Endothelial cell of umbilical vein (primary cell): ENCODE measurements at regions of chr7 and their contacts with region 1.

Region 1: GRCh38 chr7:26365077-26365900 is 73.6 kb downstream of the SNX10 start:
- DNase-seq: peak; percentile 88
- H3K4me3 ChIP-seq: no peak overlapping the region
- H3K27ac ChIP-seq: no peak overlapping the region
- H3K4me1 ChIP-seq: peaks cover 15% of the 10 kb centered on the region
- H3K27me3 ChIP-seq: peaks cover 0 to 8% of the 10 kb centered on the region in 2 experiments
- CTCF ChIP-seq: peak; percentile 56 to 60
- POLR2A ChIP-seq: no peak

Region 2: GRCh38 chr7:26078437-26079336 is 286.6 kb before region 1 on chr7:
- CTCF ChIA-PET with region 1: interaction called, 233 read pairs
- POLR2A ChIA-PET with region 1: no interaction called
- dilution Hi-C with region 1: no loop called
- intact Hi-C with region 1: loop called (anchors 2 kb)
- DNase-seq: peak; percentile 45
- H3K4me3 ChIP-seq: no peak overlapping the region
- H3K27ac ChIP-seq: no peak overlapping the region
- H3K4me1 ChIP-seq: no peaks in the 10 kb centered on the region
- H3K27me3 ChIP-seq: peaks cover 27 to 54% of the 10 kb centered on the region in 2 experiments
- CTCF ChIP-seq: peak; percentile 13 to 45
- POLR2A ChIP-seq: no peak

Region 3: DNA sequence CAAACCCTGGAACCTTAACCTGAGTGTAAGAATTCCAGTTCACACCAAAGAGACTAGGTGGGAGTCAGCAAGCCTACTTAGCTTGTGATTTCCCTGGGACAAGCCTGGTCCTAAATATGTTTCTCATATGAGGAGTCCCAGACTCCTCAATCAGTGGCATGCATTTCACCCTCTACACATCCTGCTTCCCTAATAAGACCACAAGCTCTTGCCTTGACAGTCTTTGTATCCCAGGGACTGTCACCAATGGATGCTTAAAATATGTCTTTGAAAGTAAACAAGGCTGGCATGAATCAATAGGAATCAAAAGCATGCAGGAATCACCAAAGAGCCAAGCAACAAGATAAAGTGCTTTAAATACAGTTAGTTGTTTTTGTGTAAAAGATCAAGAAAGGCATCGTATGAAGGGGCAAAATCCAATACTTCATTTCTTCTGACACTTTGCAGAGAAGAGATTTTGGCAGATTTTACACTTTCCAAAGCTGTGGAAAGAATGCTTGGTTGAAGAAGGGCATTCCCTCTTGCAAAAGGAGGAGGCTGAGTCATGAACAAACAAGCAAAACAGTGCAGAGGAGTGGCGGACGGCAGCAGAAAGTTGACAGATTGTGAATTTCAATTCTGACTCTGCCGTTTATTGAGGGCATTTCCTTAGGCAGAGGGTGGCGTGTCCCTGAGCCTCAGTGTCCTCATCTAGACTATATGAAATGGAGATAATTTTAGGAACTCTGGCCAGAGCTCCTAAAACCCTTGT is 221.8 kb before region 1 on chr7:
- CTCF ChIA-PET with region 1: no interaction called
- POLR2A ChIA-PET with region 1: no interaction called
- dilution Hi-C with region 1: no loop called
- intact Hi-C with region 1: no loop called
- DNase-seq: no peak
- H3K4me3 ChIP-seq: no peak overlapping the region
- H3K27ac ChIP-seq: no peak overlapping the region
- H3K4me1 ChIP-seq: no peaks in the 10 kb centered on the region
- H3K27me3 ChIP-seq: peaks cover 5 to 6% of the 10 kb centered on the region in 2 experiments
- CTCF ChIP-seq: no peak
- POLR2A ChIP-seq: no peak

Region 4: GRCh38 chr7:26278770-26279169 is 86.5 kb before region 1 on chr7:
- CTCF ChIA-PET with region 1: interaction called, 4 read pairs
- POLR2A ChIA-PET with region 1: no interaction called
- dilution Hi-C with region 1: no loop called
- intact Hi-C with region 1: loop called (anchors 5 kb)
- DNase-seq: no peak
- H3K4me3 ChIP-seq: no peak overlapping the region
- H3K27ac ChIP-seq: no peak overlapping the region
- H3K4me1 ChIP-seq: no peaks in the 10 kb centered on the region
- H3K27me3 ChIP-seq: no peaks in the 10 kb centered on the region
- CTCF ChIP-seq: no peak
- POLR2A ChIP-seq: no peak

Region 5: GRCh38 chr7:26398756-26399501 is 33.6 kb after region 1 on chr7:
- CTCF ChIA-PET with region 1: interaction called, 22 read pairs
- POLR2A ChIA-PET with region 1: no interaction called
- dilution Hi-C with region 1: no loop called
- intact Hi-C with region 1: no loop called
- DNase-seq: peak; percentile 78
- H3K4me3 ChIP-seq: peak overlapping the region; percentile 12 to 65 (median 61)
- H3K27ac ChIP-seq: peak overlapping the region; percentile 39
- H3K4me1 ChIP-seq: peaks cover 11% of the 10 kb centered on the region
- H3K27me3 ChIP-seq: no peaks in the 10 kb centered on the region
- CTCF ChIP-seq: peak; percentile 42 to 65
- POLR2A ChIP-seq: no peak

Region 6: DNA sequence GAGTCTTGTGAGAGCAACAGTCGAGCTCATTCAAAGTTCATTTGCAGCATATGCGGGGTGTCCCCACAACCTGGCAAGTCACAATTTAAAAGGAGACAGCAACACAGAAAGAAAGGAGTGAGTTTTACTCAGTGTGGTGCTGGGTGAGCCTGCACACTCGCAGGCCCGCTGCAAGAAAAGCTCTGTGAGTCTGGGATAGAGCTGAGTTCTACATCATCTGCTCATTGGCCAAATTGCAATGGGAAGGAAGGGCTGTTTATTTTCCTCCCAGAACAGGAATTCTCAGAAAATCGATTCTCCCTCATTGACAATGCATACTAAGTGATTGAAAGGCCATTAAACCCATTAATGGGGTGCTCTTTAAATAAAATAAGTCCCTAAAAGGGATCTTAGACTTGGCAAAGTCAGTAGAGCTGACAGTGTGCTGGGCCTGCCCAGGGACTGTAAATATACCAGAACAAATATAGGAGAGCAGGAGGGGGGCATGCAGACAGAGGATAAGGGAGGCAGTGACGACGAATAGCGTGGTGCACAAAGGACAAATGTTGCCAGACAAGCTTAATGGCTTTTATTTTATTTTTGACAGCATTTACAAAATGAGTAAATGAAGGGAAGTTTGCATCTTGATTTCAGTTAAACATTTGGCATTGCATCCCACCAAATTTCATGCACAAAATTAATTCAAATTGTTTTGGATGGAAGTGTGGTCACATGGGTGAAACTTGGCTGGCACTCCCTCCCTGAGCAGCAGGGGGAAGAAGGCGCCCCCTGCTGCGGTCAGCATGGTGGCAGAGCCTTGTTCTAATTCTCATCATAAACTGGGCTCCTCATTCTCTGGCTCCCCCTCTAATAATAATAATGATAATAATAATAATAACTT is 142.1 kb after region 1 on chr7:
- CTCF ChIA-PET with region 1: interaction called, 54 read pairs
- POLR2A ChIA-PET with region 1: no interaction called
- dilution Hi-C with region 1: no loop called
- intact Hi-C with region 1: no loop called
- DNase-seq: peak; percentile 25
- H3K4me3 ChIP-seq: no peak overlapping the region
- H3K27ac ChIP-seq: no peak overlapping the region
- H3K4me1 ChIP-seq: no peaks in the 10 kb centered on the region
- H3K27me3 ChIP-seq: peaks cover 10% of the 10 kb centered on the region in 2 experiments
- CTCF ChIP-seq: peak; percentile 30 to 52
- POLR2A ChIP-seq: no peak

Region 7: GRCh38 chr7:26549281-26549943 is 184.1 kb after region 1 on chr7:
- CTCF ChIA-PET with region 1: no interaction called
- POLR2A ChIA-PET with region 1: no interaction called
- dilution Hi-C with region 1: no loop called
- intact Hi-C with region 1: no loop called
- DNase-seq: peak; percentile 19
- H3K4me3 ChIP-seq: no peak overlapping the region
- H3K27ac ChIP-seq: no peak overlapping the region
- H3K4me1 ChIP-seq: no peaks in the 10 kb centered on the region
- H3K27me3 ChIP-seq: peaks cover 1 to 3% of the 10 kb centered on the region in 2 experiments
- CTCF ChIP-seq: no peak
- POLR2A ChIP-seq: no peak

Region 8: DNA sequence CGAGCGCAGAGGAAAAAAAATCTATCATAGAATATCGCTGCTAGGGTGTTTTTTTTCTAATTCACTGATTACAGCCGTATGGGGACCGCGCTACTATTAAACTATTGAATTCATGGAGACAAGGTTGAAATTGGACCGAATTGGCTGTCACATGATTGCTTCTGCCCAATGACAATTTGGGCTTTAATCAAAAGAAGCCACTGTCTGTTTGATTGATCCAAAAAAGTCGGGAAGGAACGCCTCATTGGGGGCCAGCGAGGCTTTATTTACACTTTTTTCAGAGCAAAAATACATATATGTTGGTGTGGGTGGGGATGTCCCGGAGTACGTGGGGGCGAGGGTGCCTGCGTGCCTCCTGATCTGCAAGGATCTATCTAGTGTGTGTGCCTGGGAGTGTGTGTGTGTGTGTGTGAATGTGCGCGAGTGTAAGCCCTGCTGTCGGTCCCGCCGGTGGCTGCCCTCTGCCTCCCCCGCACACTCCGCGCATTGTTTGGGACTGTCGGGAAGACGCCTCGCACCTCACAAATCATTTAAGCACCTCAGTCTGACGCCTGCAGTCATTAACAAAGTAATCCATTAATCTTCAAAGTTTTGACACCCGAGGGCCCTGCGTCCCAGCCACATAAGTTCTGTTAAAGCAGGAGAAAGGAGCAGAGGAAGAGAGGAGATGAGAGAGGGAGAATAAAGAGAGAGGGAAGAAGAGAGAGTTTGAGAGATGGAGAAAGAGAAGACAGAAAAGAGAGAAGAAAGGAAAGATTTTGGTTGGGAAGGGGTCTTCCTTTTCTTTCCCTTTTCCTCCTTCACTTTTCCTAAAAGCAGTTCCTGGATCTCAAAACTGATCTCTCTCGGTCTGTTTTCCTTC is 737.5 kb after region 1 on chr7 and contains the start of gene HOXA2:
- CTCF ChIA-PET with region 1: interaction called, 5 read pairs
- POLR2A ChIA-PET with region 1: no interaction called
- dilution Hi-C with region 1: no loop called
- intact Hi-C with region 1: loop called (anchors 5 kb)
- DNase-seq: peak; percentile 86
- H3K4me3 ChIP-seq: peak within 1 kb of the TSS; percentile 35 to 92 (median 45)
- H3K27ac ChIP-seq: peak within 1 kb of the TSS; percentile 93
- H3K4me1 ChIP-seq: peaks cover 90% of the 10 kb centered on the region
- H3K27me3 ChIP-seq: no peaks in the 10 kb centered on the region
- CTCF ChIP-seq: no peak
- POLR2A ChIP-seq: no peak
- total RNA-seq, gene HOXA2: 2.2 and 2.3 TPM in 2 replicates

Region 9: DNA sequence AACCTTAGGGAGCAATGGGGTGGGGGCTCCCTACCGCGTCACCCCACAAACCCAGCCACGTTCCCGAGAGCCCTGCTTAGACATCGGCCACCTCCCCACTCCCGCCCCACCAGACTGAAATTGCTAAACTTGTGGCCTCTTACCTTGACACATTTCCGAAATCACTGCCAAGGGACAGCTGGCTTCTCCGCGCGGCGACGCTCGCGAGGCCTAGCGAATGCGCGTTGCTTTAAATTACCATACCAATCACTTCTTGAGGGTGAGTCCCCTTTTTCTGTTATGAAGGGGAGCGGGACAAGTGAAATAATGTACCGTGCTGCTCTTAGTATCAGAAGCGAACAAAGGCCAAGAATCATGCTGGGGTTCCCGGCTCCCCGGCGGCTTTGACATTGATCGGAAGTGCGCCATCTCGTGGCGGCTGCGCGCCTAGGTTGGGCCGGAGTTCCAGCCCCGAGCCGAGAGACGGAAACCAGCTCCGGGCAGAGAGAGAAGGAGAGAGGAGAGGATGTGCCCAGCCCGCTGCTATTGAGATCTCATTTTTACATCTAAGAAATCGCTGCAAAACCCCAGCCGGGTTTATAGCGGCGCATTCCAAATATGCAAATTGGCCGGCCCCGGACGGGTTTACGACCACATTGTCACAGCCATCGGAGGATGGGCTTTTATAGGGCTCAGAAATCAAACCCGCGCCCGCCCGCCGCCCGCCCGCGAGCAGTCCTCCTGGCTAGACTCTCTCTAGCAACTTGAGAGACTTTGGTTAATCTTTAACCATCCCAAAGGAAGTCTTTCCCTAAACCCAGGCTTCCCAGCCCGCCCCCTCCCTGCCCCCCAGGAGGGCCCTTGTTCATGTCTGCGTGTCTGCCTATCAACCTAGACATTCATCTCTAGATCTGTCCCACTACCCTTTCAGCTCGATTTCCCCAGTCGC is 814.5 kb after region 1 on chr7:
- CTCF ChIA-PET with region 1: interaction called, 14 read pairs
- POLR2A ChIA-PET with region 1: no interaction called
- dilution Hi-C with region 1: no loop called
- intact Hi-C with region 1: no loop called
- DNase-seq: peak; percentile 90
- H3K4me3 ChIP-seq: peak overlapping the region; percentile 53 to 94 (median 69)
- H3K27ac ChIP-seq: peak overlapping the region; percentile 96
- H3K4me1 ChIP-seq: peaks cover 65% of the 10 kb centered on the region
- H3K27me3 ChIP-seq: no peaks in the 10 kb centered on the region
- CTCF ChIP-seq: peak; percentile 93 to 97
- POLR2A ChIP-seq: no peak